Lower leg skin (tissue), 4 donors: ENCODE measurements at regions of chr11 and their contacts with region 1.

Region 1: DNA sequence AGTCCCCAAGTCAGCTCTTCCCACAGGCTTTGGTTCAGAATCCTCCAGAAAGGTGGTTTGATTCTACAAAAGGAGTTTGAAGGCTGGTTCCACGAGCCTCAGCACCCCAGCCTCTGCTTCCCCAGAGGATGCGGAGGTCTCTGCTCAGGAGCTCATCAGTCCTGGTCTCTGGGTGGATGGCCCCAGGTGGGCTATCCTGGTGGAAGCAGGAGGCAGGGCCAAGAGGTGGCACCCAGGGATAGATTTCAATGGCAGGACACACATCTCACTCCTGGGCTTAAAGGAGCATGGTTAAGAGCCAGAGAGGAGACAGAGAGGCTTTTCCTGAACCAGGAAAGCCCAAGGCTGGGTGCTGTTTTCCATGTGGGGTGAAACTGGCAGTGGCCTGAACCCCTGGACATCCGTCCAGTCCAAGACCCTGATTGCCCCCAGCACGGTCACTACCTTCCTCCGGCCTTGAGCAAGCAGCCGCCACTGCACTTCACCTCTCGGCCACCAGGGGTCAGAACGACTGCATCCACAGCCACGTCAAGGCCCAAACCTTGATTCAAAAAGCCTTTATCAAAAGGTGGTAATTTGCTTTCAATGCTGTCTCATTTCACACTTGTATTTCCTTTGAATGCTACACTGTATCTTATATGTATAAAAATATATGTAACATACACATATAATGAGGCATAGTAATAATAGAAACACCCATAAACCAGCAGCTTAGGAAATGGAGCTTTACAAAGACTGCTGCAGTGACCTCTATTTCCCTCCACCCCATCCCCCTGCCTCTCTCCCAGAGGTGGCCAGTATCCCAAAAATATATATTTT is 19.3 kb upstream of the FXYD2 start:
- DNase-seq: peak; percentile 74 to 97
- H3K4me3 ChIP-seq: no peak overlapping the region
- CTCF ChIP-seq: peak in 1 of 3 donors; percentile 90
- POLR2A ChIP-seq: no peak

Region 2: DNA sequence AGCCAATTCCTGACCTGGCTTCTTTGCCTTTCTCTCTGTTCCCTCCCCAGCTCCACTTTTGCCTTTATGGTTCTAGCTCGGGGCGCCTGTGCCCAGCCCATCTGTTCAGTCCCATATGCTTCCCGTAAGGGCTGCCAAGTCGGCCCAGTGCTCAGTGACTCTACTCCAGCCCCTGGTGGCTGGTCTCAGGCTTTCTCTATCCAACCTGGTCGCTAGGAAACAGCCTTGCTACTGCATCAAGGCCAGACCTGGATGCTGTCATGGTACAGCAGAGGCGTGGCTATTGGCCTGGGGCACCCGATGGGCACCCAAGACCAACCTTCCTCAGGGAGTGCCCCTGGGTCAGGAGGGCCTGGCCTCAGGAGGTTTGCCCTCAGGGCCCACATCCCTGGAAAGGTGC is 224.8 kb before region 1 on chr11:
- intact Hi-C with region 1: no loop called
- DNase-seq: no peak
- H3K4me3 ChIP-seq: no peak overlapping the region
- CTCF ChIP-seq: no peak
- POLR2A ChIP-seq: no peak

Region 3: GRCh38 chr11:117720061-117720511 is 123.8 kb before region 1 on chr11:
- intact Hi-C with region 1: no loop called
- DNase-seq: no peak
- H3K4me3 ChIP-seq: no peak overlapping the region
- CTCF ChIP-seq: no peak
- POLR2A ChIP-seq: no peak

Region 4: GRCh38 chr11:117946842-117947526 is 103.1 kb after region 1 on chr11:
- intact Hi-C with region 1: loop called (anchors 2 kb)
- DNase-seq: peak; percentile 83 to 97
- H3K4me3 ChIP-seq: no peak overlapping the region
- CTCF ChIP-seq: peak in 1 of 3 donors; percentile 95
- POLR2A ChIP-seq: no peak

Region 5: GRCh38 chr11:118051611-118052461 is 208.0 kb after region 1 on chr11:
- intact Hi-C with region 1: loop called (anchors 10 kb)
- DNase-seq: peak in 1 of 2 donors; percentile 81
- H3K4me3 ChIP-seq: no peak overlapping the region
- CTCF ChIP-seq: no peak
- POLR2A ChIP-seq: no peak